ENCODE measurements at regions of chr9 and their contacts with region 1.

Region 1: GRCh38 chr9:127916665-127917613 is at the start of gene ST6GALNAC4:
- DNase-seq: peak; percentile 85 to 91 (median 91)
- H3K4me3 ChIP-seq: peak within 1 kb of the TSS; percentile 41 to 94 (median 77)
- H3K27ac ChIP-seq: peak within 1 kb of the TSS in 1 of 2 experiments; percentile 66
- H3K4me1 ChIP-seq: peaks cover 2 to 62% (median 48%) of the 10 kb centered on the region in 4 experiments
- H3K27me3 ChIP-seq: peaks cover 0 to 2% (median 0%) of the 10 kb centered on the region in 5 experiments

Region 2: GRCh38 chr9:127763918-127764384 is 153.0 kb before region 1 on chr9:
- CTCF ChIA-PET with region 1: interaction called, 12 read pairs
- POLR2A ChIA-PET with region 1: no interaction called
- DNase-seq: peak in 2 of 3 donors; percentile 41 to 53
- H3K4me3 ChIP-seq: no peak overlapping the region
- H3K27ac ChIP-seq: no peak overlapping the region
- H3K4me1 ChIP-seq: peaks cover 2 to 52% (median 51%) of the 10 kb centered on the region in 4 experiments
- H3K27me3 ChIP-seq: no peaks in the 10 kb centered on the region

Region 3: DNA sequence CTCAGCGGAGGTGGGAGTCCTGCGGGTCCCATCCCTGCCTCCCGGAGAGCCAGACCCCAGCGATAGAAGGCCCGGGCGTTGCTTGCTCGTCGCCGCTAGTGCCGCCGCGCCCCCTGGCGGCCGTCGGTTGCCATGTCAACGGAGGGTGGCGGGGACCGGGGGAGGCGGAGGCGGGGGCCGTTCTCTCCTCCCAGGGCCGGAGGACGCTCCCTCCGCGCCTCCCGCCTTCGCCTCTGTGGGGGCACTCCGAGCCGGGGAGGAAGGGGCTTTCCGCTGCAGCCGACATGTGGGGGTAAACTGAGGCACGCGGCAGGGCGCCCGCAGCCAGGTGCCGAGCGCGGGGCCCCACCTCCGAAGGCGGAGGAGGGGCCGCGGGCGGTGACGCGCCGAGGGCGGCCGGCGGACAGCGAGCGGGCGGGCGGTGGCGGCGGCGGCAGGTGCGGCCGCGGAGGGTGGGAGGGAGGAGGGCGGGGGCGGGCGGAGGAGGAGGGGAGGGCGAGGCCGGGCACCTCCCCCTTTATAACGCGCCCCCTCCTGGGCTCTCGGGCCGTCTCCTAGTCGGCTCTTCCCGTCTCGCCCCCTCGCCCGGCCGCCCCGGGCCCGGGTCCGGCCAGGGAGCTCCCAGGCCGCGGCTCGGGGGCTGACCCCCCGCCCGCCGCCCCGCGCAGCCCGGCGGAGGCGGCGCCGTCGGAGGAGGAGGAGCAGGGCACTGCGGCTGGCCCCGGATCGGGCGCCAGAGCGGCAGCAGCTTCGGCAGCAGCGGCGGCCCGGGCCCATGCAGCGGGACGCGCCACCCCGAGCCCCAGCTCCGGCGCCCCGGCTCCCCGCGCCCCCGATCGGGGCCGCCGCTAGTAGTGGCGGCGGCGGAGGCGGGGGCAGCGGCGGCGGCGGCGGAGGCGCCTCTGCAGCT is 131.7 kb before region 1 on chr9:
- CTCF ChIA-PET with region 1: interaction called, 13 read pairs
- POLR2A ChIA-PET with region 1: interaction called, 7 read pairs
- DNase-seq: peak; percentile 89 to 94 (median 92)
- H3K4me3 ChIP-seq: peak overlapping the region; percentile 59 to 94 (median 85)
- H3K27ac ChIP-seq: peak overlapping the region in 1 of 2 experiments; percentile 89
- H3K4me1 ChIP-seq: peaks cover 23 to 69% (median 62%) of the 10 kb centered on the region in 4 experiments
- H3K27me3 ChIP-seq: no peaks in the 10 kb centered on the region

Region 4: GRCh38 chr9:127877566-127877998 is 39.4 kb before region 1 on chr9 and contains the start of gene AK1:
- CTCF ChIA-PET with region 1: interaction called, 41 read pairs
- POLR2A ChIA-PET with region 1: interaction called, 13 read pairs
- DNase-seq: no peak
- H3K4me3 ChIP-seq: peak within 1 kb of the TSS in 5 of 7 experiments; percentile 36 to 64 (median 51)
- H3K27ac ChIP-seq: no peak within 1 kb of the TSS
- H3K4me1 ChIP-seq: peaks cover 0 to 24% (median 18%) of the 10 kb centered on the region in 4 experiments
- H3K27me3 ChIP-seq: peaks cover 0 to 3% (median 0%) of the 10 kb centered on the region in 5 experiments

Region 5: DNA sequence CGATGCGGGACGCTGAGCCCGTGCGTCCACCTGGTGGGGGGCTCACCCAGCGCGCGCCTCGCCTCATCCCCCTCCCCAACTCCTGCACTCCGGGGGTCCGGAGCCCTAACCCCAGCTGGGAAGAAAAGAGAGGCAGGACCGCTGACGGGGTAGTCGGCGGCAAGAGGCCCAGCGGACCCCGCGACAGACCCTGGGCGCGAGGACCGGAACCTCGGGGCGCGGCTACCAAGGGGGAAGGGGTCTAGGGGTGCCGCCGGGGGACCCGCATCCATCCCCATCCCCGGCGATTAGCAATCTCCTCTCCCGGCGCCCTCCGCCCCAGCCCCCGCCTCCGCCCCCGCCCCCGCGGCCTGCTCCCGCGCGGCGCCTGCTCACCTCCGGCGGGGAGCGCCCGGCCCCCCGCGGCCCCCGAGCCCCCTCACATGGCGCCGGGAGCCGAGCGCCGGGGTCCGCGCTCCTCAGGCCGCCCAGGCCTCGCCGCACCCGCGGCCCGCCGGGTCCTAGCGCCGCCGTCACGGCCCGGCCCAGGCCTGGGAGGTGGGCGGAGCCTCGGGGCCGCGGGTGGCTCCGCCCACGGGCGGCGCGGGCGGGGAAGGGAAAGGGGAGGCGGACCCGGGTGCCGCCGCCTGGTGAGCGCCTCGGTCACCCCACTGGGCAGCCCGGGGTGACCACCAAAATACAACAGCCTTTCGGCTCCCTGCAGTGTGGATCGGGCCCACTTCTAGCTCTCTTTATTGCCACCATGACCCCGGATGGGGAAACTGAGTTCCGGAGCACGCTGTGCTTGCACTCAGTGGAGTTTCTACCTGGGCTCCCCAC is 17.6 kb before region 1 on chr9 and contains the start of gene ST6GALNAC6:
- CTCF ChIA-PET with region 1: interaction called, 15 read pairs
- POLR2A ChIA-PET with region 1: interaction called, 15 read pairs
- DNase-seq: peak; percentile 71 to 85 (median 81)
- H3K4me3 ChIP-seq: peak within 1 kb of the TSS; percentile 67 to 86 (median 79)
- H3K27ac ChIP-seq: peak within 1 kb of the TSS in 1 of 2 experiments; percentile 61
- H3K4me1 ChIP-seq: peaks cover 6 to 48% (median 38%) of the 10 kb centered on the region in 4 experiments
- H3K27me3 ChIP-seq: no peaks in the 10 kb centered on the region

Region 6: GRCh38 chr9:128034821-128035764 is 118.2 kb after region 1 on chr9:
- CTCF ChIA-PET with region 1: interaction called, 16 read pairs
- POLR2A ChIA-PET with region 1: no interaction called
- DNase-seq: peak; percentile 76 to 85 (median 78)
- H3K4me3 ChIP-seq: no peak overlapping the region
- H3K27ac ChIP-seq: no peak overlapping the region
- H3K4me1 ChIP-seq: peaks cover 0 to 26% (median 10%) of the 10 kb centered on the region in 4 experiments
- H3K27me3 ChIP-seq: no peaks in the 10 kb centered on the region

Measured in common myeloid progenitor, CD34-positive (primary cell).